Left ventricle myocardium superior (tissue), 1 donor: ENCODE measurements at regions of chr1 and their contacts with region 1.

Region 1: GRCh38 chr1:161749509-161750407 is at the start of gene DUSP12:
- DNase-seq: peak; percentile 95
- ATAC-seq: peak; percentile 100
- total RNA-seq, gene DUSP12: 8.3 TPM

Region 2: GRCh38 chr1:161486806-161487741 is 262.7 kb before region 1 on chr1:
- intact Hi-C with region 1: loop called (anchors 10 kb)
- DNase-seq: peak; percentile 46
- ATAC-seq: peak; percentile 84

Region 3: DNA sequence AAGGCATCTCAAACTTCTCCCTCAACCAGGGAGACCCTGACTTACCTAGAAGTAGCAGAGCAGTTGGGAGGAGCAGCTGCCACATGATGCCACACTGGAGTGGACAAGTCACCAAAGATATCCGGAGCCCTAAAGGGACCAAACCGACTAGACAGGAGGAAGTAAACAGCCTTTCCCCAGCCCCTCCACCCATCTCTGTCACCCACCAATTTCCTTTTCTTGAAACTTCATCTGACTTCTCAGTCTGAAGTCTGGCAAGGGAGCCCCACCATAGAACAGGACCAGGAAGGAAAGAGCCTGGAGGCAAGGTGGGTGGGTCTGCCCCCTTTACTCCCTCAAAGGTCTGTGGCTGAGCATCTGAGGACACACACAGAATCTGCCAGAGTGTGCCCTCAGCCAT is 200.1 kb before region 1 on chr1 and contains the start of gene FCGR3A:
- intact Hi-C with region 1: no loop called
- DNase-seq: no peak
- ATAC-seq: peak; percentile 53
- total RNA-seq, gene FCGR3A: 19.9 TPM

Region 4: GRCh38 chr1:161885003-161885402 is 135.2 kb after region 1 on chr1:
- intact Hi-C with region 1: no loop called
- DNase-seq: no peak
- ATAC-seq: peak; percentile 76

Region 5: DNA sequence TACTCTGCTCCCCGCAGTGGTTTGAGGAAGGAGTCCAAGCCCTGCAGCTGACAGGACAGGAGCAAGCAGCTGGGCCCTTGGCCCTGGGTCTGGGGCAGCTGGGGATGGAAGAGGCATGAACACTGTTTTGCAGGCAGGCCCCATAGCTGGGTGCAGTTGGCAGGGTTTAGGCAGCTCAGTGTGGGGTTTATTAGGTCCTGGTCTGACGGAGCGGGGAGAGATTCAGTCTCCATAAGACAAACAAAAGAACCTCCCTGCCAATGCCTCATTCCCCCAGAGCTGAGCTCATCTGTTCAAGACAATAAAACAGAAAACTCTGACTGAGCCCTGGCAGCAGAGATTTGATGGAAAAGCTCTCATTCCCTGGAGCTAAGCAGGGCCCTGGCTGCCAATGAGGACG is 236.6 kb after region 1 on chr1:
- intact Hi-C with region 1: no loop called
- DNase-seq: peak; percentile 47
- ATAC-seq: peak; percentile 72